GM10248 (cell line): ENCODE measurements at regions of chr5 and their contacts with region 1.

Region 1: GRCh38 chr5:66440202-66440680 is 156.0 kb upstream of the MAST4 start:
- DNase-seq: peak; percentile 19
- CTCF ChIP-seq: no peak

Region 2: GRCh38 chr5:66302344-66302743 is 137.9 kb before region 1 on chr5:
- CTCF ChIA-PET with region 1: no interaction called
- POLR2A ChIA-PET with region 1: no interaction called
- DNase-seq: no peak
- CTCF ChIP-seq: no peak

Region 3: GRCh38 chr5:66426259-66427138 is 13.7 kb before region 1 on chr5:
- CTCF ChIA-PET with region 1: interaction called, 13 read pairs
- POLR2A ChIA-PET with region 1: no interaction called
- DNase-seq: no peak
- CTCF ChIP-seq: no peak